Mammary epithelial cell (primary cell): ENCODE measurements at regions of chr15 and their contacts with region 1.

Region 1: DNA sequence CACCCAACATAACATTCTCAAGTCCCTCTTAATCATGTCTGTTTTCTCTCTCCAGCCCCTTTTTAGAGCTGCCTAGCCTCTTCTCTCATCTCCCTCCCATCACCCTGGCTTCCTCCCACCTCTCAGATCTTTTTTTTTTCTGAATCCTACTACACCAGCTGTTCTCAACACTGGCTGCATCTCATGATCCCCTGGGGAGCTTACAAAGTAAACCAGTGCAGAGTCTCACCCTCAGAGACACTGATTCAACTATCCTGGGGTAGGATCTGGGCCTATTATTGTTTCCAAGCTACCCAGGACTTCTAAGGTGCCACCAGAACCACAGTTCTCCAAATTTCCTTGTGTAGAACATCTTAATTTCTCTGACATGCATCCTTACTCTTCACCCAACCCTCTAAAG is 50.3 kb upstream of the ACAN start:
- DNase-seq: no peak
- H3K4me3 ChIP-seq: no peak overlapping the region
- H3K27ac ChIP-seq: no peak overlapping the region
- H3K4me1 ChIP-seq: no peaks in the 10 kb centered on the region
- H3K27me3 ChIP-seq: peaks cover 3% of the 10 kb centered on the region
- CTCF ChIP-seq: no peak

Region 2: DNA sequence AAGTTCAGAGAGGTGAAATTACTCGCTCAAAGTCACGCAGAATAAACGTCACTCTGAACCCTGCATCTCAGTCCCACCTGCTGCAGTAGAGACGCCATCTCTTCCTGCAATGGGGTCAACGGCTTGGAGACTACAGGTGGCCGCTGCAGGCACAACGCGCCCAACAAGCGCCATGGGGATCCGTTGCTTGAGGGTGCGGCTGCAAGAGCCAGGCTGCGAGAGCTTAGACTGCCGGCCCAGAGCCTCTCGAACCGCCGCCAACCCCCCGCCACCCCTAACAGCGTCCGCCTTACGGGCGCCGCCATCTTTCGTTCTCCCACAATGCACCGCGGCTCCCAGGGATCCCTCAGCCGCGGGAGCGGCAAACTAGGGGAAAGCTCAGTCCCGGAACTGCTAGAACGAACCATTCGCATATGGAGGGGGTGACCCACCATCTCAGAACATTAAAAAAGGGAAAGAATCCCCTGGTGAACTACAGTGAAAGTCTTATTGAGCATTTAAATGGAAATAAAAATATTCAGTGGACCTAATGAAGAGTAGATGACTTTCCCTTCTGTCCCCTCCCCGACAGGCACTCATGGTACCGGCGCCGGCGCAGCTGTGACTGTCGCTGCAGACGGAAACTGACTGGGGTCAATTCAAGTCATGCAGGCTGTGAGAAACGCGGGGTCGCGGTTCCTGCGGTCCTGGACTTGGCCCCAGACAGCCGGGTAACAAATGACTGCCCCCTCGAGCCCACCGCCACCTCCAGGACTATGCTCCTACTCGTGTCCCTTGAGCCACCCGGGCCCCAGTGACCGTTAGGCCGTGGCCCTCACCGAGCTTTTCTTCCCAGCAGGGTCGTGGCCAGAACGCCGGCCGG is 285.6 kb before region 1 on chr15 and contains the starts of genes MRPL46 and MRPS11:
- CTCF ChIA-PET with region 1: no interaction called
- dilution Hi-C with region 1: no loop called
- in situ Hi-C with region 1: no loop called
- intact Hi-C with region 1: no loop called
- DNase-seq: peak; percentile 80
- H3K4me3 ChIP-seq: peak within 1 kb of the TSS; percentile 78 to 90 (median 87)
- H3K27ac ChIP-seq: peak within 1 kb of the TSS; percentile 96
- H3K4me1 ChIP-seq: peaks cover 15% of the 10 kb centered on the region
- H3K27me3 ChIP-seq: no peaks in the 10 kb centered on the region
- CTCF ChIP-seq: no peak
- total RNA-seq, gene MRPL46: 10.8 to 21.6 TPM
- total RNA-seq, gene MRPS11: 21.2 to 60.2 TPM

Region 3: GRCh38 chr15:88674661-88675060 is 78.3 kb before region 1 on chr15:
- CTCF ChIA-PET with region 1: no interaction called
- dilution Hi-C with region 1: loop called (anchors 5 kb)
- in situ Hi-C with region 1: no loop called
- intact Hi-C with region 1: no loop called
- DNase-seq: no peak
- H3K4me3 ChIP-seq: no peak overlapping the region
- H3K27ac ChIP-seq: no peak overlapping the region
- H3K4me1 ChIP-seq: no peaks in the 10 kb centered on the region
- H3K27me3 ChIP-seq: no peaks in the 10 kb centered on the region
- CTCF ChIP-seq: no peak

Region 4: GRCh38 chr15:88834211-88834812 is 81.4 kb after region 1 on chr15:
- CTCF ChIA-PET with region 1: no interaction called
- dilution Hi-C with region 1: no loop called
- in situ Hi-C with region 1: no loop called
- intact Hi-C with region 1: loop called (anchors 10 kb)
- DNase-seq: peak; percentile 81
- H3K4me3 ChIP-seq: no peak overlapping the region
- H3K27ac ChIP-seq: no peak overlapping the region
- H3K4me1 ChIP-seq: peaks cover 20% of the 10 kb centered on the region
- H3K27me3 ChIP-seq: no peaks in the 10 kb centered on the region
- CTCF ChIP-seq: peak; percentile 48 to 70

Region 5: DNA sequence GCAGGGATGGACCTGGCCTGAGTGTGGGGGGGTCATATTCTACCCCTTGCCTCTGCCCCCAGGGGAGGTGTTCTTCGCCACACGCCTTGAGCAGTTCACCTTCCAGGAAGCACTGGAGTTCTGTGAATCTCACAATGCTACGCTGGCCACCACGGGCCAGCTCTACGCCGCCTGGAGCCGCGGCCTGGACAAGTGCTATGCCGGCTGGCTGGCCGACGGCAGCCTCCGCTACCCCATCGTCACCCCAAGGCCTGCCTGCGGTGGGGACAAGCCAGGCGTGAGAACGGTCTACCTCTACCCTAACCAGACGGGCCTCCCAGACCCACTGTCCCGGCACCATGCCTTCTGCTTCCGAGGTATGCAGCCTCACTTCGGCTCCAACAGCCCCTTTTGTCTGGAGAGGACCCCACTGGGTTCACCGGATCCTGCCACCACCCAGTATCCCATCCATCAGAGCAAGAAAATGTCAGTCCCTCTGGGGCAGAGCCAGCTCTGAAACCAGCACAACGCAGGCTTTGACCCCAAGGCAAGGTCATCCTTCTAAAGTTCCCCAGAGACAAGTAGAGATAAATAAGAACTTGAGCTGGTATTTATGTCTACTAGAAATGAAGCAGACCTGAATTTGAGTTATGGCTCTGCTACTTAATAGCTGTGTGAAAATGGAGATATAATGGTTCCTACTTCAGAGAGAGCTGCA is 96.6 kb after region 1 on chr15:
- CTCF ChIA-PET with region 1: no interaction called
- dilution Hi-C with region 1: loop called (anchors 5 kb)
- in situ Hi-C with region 1: no loop called
- intact Hi-C with region 1: no loop called
- DNase-seq: no peak
- H3K4me3 ChIP-seq: no peak overlapping the region
- H3K27ac ChIP-seq: no peak overlapping the region
- H3K4me1 ChIP-seq: no peaks in the 10 kb centered on the region
- H3K27me3 ChIP-seq: peaks cover 5% of the 10 kb centered on the region
- CTCF ChIP-seq: no peak